Heart left ventricle (tissue), 16 donors: ENCODE measurements at regions of chr14 and their contacts with region 1.

Region 1: DNA sequence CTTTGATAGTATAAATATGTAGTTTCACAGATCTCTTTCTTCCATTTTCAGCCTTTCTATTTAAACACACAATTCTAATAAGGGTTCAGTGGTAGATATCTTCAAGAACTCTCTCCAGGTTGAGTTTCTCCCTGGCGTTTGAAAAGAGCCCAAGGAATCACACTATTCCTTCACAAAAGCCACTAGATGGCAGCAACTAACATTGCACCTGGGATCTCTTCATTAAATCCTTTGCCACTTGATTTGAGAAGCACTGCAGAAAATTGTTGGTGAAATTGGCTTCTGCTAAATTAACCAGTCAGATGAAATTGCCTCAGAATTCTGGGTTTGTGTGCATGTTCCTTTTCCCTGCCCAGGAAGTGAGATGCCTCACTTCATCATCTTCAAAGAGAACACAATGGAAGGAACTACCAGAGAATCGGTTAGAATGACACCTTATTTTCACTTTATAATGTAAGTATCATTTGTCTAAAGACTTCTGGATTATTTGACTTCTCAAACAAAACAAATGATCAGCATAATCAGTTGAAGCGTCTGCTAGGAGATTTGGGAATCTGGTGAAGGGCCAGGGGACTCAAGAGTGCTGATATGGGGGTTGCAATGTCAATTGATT is 6.8 kb downstream of the CCDC198 start:
- DNase-seq: no peak
- ATAC-seq: peak in 1 of 4 donors; percentile 61
- H3K4me3 ChIP-seq: no peak overlapping the region
- H3K27ac ChIP-seq: no peak overlapping the region
- H3K4me1 ChIP-seq: peaks cover 0 to 10% (median 0%) of the 10 kb centered on the region in 12 donors
- H3K27me3 ChIP-seq: no peaks in the 10 kb centered on the region
- CTCF ChIP-seq: peak in 11 of 12 donors; percentile 45 to 74 (median 59)
- POLR2A ChIP-seq: no peak

Region 2: GRCh38 chr14:57420986-57421385 is 65.9 kb before region 1 on chr14:
- intact Hi-C with region 1: no loop called
- DNase-seq: no peak
- ATAC-seq: no peak
- H3K4me3 ChIP-seq: no peak overlapping the region
- H3K27ac ChIP-seq: no peak overlapping the region
- H3K4me1 ChIP-seq: no peaks in the 10 kb centered on the region
- H3K27me3 ChIP-seq: no peaks in the 10 kb centered on the region
- CTCF ChIP-seq: no peak
- POLR2A ChIP-seq: no peak

Region 3: GRCh38 chr14:57871459-57872080 is 384.7 kb after region 1 on chr14:
- intact Hi-C with region 1: loop called in 1 of 10 experiments (anchors 10 kb)
- DNase-seq: peak in 1 of 5 donors; percentile 25
- ATAC-seq: no peak
- H3K4me3 ChIP-seq: no peak overlapping the region
- H3K27ac ChIP-seq: no peak overlapping the region
- H3K4me1 ChIP-seq: no peaks in the 10 kb centered on the region
- H3K27me3 ChIP-seq: peaks cover 0 to 41% (median 2%) of the 10 kb centered on the region in 9 donors
- CTCF ChIP-seq: peak in 10 of 12 donors; percentile 19 to 51 (median 32)
- POLR2A ChIP-seq: no peak

Region 4: GRCh38 chr14:57889245-57889644 is 402.4 kb after region 1 on chr14:
- intact Hi-C with region 1: loop called in 1 of 10 experiments (anchors 10 kb)
- DNase-seq: peak; percentile 23 to 79 (median 66)
- ATAC-seq: peak; percentile 81 to 93 (median 89)
- H3K4me3 ChIP-seq: no peak overlapping the region
- H3K27ac ChIP-seq: no peak overlapping the region
- H3K4me1 ChIP-seq: peaks cover 0 to 4% (median 0%) of the 10 kb centered on the region in 12 donors
- H3K27me3 ChIP-seq: peaks cover 0 to 5% (median 0%) of the 10 kb centered on the region in 9 donors
- CTCF ChIP-seq: no peak
- POLR2A ChIP-seq: no peak

Region 5: GRCh38 chr14:58072288-58073071 is 585.6 kb after region 1 on chr14:
- intact Hi-C with region 1: loop called (anchors 1 to 5 kb)
- DNase-seq: peak in 4 of 5 donors; percentile 38 to 53 (median 45)
- ATAC-seq: peak; percentile 51 to 78 (median 68)
- H3K4me3 ChIP-seq: peak overlapping the region in 8 of 12 donors; percentile 18 to 50 (median 35)
- H3K27ac ChIP-seq: no peak overlapping the region
- H3K4me1 ChIP-seq: peaks cover 0 to 6% (median 0%) of the 10 kb centered on the region in 12 donors
- H3K27me3 ChIP-seq: no peaks in the 10 kb centered on the region
- CTCF ChIP-seq: peak; percentile 60 to 82 (median 76)
- POLR2A ChIP-seq: no peak